ENCODE measurements at regions of chrX and their contacts with region 1.

Region 1: DNA sequence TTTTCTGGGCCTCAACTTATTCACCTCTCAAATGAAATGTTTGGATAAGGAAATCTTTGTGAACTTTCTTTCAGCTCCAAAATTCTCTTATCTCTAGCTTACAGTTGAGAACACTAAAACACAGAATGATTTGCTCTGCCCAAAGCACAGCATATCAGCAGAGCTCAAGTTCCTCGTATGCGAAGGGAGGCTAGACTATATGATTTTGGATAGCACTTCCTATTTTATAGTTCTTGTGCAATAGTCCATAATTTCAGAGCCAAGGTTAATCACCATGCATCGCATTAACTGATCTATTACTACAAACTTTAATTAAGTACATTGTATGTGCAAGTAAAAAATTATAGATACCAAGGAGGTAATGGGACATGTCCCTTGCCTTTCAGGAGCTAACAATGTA is 27.0 kb upstream of the KLHL13 start:
- DNase-seq: no peak
- H3K4me3 ChIP-seq: no peak overlapping the region
- H3K27ac ChIP-seq: no peak overlapping the region
- H3K4me1 ChIP-seq: no peaks in the 10 kb centered on the region
- H3K27me3 ChIP-seq: no peaks in the 10 kb centered on the region
- CTCF ChIP-seq: no peak
- POLR2A ChIP-seq: no peak

Region 2: DNA sequence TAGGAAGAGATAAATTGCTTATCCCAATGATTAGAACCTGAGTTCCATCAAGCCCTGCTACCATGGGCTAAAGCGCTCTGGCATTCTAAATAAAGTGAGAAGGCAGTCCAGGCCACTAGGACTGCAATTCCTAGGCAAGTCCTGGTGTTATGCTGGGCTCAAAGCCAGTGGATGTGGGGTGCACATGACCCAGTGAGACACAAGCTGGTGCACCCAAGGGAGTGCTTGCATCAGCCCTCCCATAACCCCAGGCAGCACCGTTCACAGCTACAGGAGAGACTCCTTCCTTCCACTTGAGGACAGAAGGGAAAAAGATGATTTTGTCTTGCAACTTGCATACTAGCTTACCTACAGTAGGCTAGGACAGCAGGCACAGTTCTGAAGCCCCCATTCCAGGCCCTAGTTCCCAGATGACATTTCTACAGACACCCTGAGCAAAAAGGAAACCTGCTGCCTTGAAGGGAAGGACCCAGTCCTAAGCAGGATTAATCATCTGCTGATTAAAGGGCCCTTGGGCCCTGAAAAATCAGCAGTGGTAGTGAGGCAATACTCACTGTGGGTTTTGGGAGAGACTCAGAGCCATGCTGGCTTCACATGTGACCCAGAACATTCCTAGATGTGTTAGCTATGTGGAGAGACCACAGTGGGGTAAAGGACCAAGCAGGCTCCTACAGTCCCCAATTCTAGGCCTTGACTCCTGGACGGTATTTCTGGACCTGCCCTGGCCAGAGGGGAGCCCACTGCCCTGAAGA is 104.8 kb before region 1 on chrX:
- CTCF ChIA-PET with region 1: no interaction called
- POLR2A ChIA-PET with region 1: no interaction called
- dilution Hi-C with region 1: no loop called
- intact Hi-C with region 1: no loop called
- DNase-seq: no peak
- H3K4me3 ChIP-seq: no peak overlapping the region
- H3K27ac ChIP-seq: no peak overlapping the region
- H3K4me1 ChIP-seq: no peaks in the 10 kb centered on the region
- H3K27me3 ChIP-seq: no peaks in the 10 kb centered on the region
- CTCF ChIP-seq: no peak
- POLR2A ChIP-seq: no peak

Region 3: DNA sequence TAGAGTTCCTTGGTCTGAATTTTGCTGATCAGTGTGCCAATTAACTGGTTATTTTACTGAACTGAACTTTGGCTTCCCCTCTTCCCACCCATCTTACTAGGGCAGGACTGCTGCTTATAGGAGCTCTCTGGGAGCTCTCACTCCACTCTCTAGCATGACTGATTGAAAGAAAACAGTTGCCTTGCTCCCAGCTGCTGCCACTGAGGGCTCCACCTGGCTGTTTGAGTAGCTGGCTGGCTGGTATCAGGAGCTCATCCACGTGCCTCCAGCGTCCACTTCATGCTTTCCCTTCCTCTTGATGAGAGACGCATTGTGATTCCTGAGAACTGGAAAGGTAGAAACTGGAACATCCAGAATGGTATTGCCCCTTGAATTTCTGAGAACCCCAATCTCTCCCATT is 46.0 kb after region 1 on chrX:
- CTCF ChIA-PET with region 1: no interaction called
- POLR2A ChIA-PET with region 1: no interaction called
- dilution Hi-C with region 1: no loop called
- intact Hi-C with region 1: loop called (anchors 1 kb)
- DNase-seq: no peak
- H3K4me3 ChIP-seq: no peak overlapping the region
- H3K27ac ChIP-seq: no peak overlapping the region
- H3K4me1 ChIP-seq: no peaks in the 10 kb centered on the region
- H3K27me3 ChIP-seq: no peaks in the 10 kb centered on the region
- CTCF ChIP-seq: no peak
- POLR2A ChIP-seq: no peak

Region 4: GRCh38 chrX:118853596-118853995 is 710.0 kb after region 1 on chrX:
- CTCF ChIA-PET with region 1: no interaction called
- POLR2A ChIA-PET with region 1: no interaction called
- dilution Hi-C with region 1: no loop called
- intact Hi-C with region 1: no loop called
- DNase-seq: no peak
- H3K4me3 ChIP-seq: no peak overlapping the region
- H3K27ac ChIP-seq: no peak overlapping the region
- H3K4me1 ChIP-seq: no peaks in the 10 kb centered on the region
- H3K27me3 ChIP-seq: no peaks in the 10 kb centered on the region
- CTCF ChIP-seq: no peak
- POLR2A ChIP-seq: no peak

Measured in endothelial cell of umbilical vein (primary cell).